SK-N-SH (cell line): ENCODE measurements at regions of chr10 and their contacts with region 1.

Region 1: GRCh38 chr10:63629363-63630084 is 108.3 kb downstream of the REEP3 start:
- DNase-seq: peak; percentile 65
- H3K4me3 ChIP-seq: peak overlapping the region; percentile 64 to 73
- H3K27ac ChIP-seq: peak overlapping the region; percentile 100
- H3K4me1 ChIP-seq: peaks cover 25 to 27% of the 10 kb centered on the region in 2 experiments
- H3K27me3 ChIP-seq: no peaks in the 10 kb centered on the region
- CTCF ChIP-seq: peak; percentile 91
- EP300 ChIP-seq: peak; percentile 76 to 78
- RAD21 ChIP-seq: peak; percentile 94

Region 2: DNA sequence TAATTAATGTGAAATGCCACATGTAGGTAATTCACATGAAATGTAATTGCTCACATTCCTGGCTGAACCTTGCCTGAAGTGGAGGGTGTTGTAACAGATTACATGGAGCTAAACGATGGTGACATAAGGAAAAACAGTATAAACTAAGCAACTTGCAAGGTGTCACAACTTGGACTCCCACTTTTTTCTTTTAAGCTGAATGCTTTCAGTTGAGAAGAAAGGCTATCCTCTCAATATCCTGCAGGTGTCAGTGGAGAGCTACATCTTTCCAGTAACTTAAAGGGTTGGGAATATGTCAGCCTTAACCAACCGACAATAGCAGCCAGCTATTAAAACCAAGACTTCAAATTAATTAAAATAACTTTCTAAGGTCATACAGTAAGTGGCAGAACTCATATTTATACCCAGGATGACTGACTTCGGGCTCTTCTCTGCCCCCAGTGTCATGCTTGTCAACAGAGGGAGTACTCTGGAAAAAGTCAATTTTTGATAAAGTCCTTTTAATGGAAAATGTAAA is 462.7 kb before region 1 on chr10:
- CTCF ChIA-PET with region 1: interaction called, 79 read pairs
- POLR2A ChIA-PET with region 1: interaction called, 22 read pairs
- DNase-seq: peak; percentile 41
- H3K4me3 ChIP-seq: no peak overlapping the region
- H3K27ac ChIP-seq: peak overlapping the region; percentile 17 to 34; a peak in 1 of 4 replicates
- H3K4me1 ChIP-seq: peaks cover 0 to 5% of the 10 kb centered on the region in 2 experiments; a peak in 3 of 4 replicates
- H3K27me3 ChIP-seq: no peaks in the 10 kb centered on the region
- CTCF ChIP-seq: peak; percentile 87
- EP300 ChIP-seq: no peak
- RAD21 ChIP-seq: peak; percentile 83

Region 3: GRCh38 chr10:63217120-63217605 is 412.4 kb before region 1 on chr10:
- CTCF ChIA-PET with region 1: interaction called, 34 read pairs
- POLR2A ChIA-PET with region 1: interaction called, 3 read pairs
- DNase-seq: peak; percentile 54
- H3K4me3 ChIP-seq: peak overlapping the region in 1 of 2 experiments; percentile 1; a peak in 1 of 4 replicates
- H3K27ac ChIP-seq: peak overlapping the region; percentile 58 to 71; a peak in 3 of 4 replicates
- H3K4me1 ChIP-seq: peaks cover 5 to 11% of the 10 kb centered on the region in 2 experiments; a peak in 3 of 4 replicates
- H3K27me3 ChIP-seq: no peaks in the 10 kb centered on the region
- CTCF ChIP-seq: peak; percentile 78
- EP300 ChIP-seq: no peak
- RAD21 ChIP-seq: peak; percentile 81

Region 4: DNA sequence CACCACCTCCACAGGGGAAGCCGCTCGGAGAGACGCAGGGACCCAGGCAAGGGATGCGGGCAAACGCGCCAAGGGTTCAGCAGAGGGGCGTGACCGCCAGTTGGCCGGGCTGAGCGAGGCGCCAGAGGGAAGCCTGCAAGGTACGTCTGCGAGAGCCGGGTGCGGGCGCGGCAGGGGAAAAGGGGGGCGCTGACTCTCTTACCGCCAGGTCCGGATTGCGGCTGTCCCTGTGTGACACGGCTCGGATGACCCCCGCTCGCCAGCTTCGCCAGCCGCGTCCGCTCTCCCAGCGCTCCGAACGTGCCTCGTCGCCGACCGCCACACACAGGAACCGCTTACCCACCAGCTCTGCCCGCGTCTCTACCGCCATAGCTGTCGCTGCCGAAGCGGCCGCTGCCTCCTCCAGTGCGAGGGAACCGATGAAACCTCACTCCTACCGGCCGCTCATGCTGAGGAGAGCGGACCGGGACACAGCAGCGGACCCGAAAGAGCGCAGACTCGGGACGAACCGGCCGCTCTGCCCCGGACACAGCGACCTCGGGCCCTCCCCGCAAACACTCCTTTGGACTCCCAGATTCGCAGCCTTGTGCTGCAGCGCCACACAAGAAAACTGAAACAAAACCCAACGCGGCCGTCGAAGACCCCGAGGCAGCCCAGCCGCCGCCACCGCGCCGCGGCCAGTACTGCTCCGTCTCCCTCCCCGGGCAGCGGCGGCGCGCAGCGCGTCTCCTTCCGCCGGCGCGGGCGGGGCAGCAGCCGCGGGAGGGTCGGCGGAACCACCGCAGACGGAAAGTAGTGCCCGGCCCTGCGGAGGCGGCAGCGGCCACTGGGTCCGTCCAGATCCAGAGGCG is 164.0 kb before region 1 on chr10 and contains the start of gene JMJD1C:
- CTCF ChIA-PET with region 1: interaction called, 9 read pairs
- POLR2A ChIA-PET with region 1: interaction called, 24 read pairs
- DNase-seq: peak; percentile 91
- H3K4me3 ChIP-seq: peak within 1 kb of the TSS; percentile 82 to 96
- H3K27ac ChIP-seq: peak within 1 kb of the TSS; percentile 86 to 98
- H3K4me1 ChIP-seq: peaks cover 14 to 33% of the 10 kb centered on the region in 2 experiments; a peak in 3 of 4 replicates
- H3K27me3 ChIP-seq: no peaks in the 10 kb centered on the region
- CTCF ChIP-seq: no peak
- EP300 ChIP-seq: peak in 1 of 2 experiments; percentile 27; a peak in 1 of 4 replicates
- RAD21 ChIP-seq: no peak
- polyA plus RNA-seq, gene JMJD1C: 11.7 and 15.3 TPM in 2 replicates

Region 5: DNA sequence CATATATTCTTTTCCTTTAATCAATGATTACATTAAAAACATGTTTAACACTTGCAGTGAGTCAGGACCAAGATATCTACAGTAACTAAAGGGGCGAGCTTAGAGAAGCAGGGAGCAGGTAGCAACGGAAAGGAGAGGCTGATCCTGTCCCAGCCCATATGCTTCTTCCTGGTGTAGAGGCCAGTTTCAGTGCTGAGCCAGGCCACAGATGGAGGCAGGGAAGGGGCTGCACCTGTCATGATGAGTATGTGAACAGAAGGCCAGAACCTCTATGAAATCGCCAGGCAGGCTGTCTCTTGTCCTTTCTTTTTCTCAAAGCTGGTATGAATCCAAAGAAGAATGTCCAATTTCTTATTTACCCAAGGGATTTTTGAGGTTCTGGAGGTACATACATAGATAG is 92.0 kb before region 1 on chr10:
- CTCF ChIA-PET with region 1: interaction called, 36 read pairs
- POLR2A ChIA-PET with region 1: interaction called, 11 read pairs
- DNase-seq: no peak
- H3K4me3 ChIP-seq: no peak overlapping the region
- H3K27ac ChIP-seq: peak overlapping the region in 1 of 2 experiments; percentile 3; a peak in 2 of 4 replicates
- H3K4me1 ChIP-seq: peaks cover 4 to 25% of the 10 kb centered on the region in 2 experiments; a peak in 3 of 4 replicates
- H3K27me3 ChIP-seq: no peaks in the 10 kb centered on the region
- CTCF ChIP-seq: no peak
- EP300 ChIP-seq: no peak
- RAD21 ChIP-seq: no peak

Region 6: DNA sequence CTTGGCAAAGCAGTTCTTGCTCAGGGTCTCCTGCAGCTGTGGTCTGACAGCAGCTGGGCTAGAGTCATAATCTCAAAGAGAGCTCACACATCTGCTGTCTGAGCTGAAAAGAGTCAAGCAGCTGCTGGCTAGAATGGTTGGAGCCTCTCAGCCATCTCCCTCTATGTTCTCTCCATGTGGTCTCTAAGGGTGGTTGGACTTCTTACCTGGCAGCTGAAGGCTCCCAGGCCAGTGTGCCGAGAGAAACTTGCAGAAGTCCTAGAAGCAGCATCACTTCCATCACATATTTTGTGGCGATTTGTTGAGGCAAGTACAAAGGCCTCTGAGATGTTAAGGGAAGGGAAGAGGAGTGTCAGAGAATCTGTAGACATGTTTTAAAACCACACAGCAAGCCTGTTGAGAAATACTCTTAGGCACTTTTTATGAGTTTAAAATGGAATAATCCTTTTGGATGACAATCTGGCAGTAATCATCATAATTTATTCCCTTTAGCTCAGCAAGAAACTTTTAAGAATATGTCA is 15.1 kb before region 1 on chr10:
- CTCF ChIA-PET with region 1: interaction called, 13 read pairs
- POLR2A ChIA-PET with region 1: interaction called, 3 read pairs
- DNase-seq: peak; percentile 33
- H3K4me3 ChIP-seq: no peak overlapping the region
- H3K27ac ChIP-seq: peak overlapping the region in 1 of 2 experiments; percentile 76; a peak in 2 of 4 replicates
- H3K4me1 ChIP-seq: peaks cover 9 to 11% of the 10 kb centered on the region in 2 experiments; a peak in 3 of 4 replicates
- H3K27me3 ChIP-seq: no peaks in the 10 kb centered on the region
- CTCF ChIP-seq: no peak
- EP300 ChIP-seq: no peak
- RAD21 ChIP-seq: peak; percentile 9; the same call in 1 of the 2 replicates

Region 7: DNA sequence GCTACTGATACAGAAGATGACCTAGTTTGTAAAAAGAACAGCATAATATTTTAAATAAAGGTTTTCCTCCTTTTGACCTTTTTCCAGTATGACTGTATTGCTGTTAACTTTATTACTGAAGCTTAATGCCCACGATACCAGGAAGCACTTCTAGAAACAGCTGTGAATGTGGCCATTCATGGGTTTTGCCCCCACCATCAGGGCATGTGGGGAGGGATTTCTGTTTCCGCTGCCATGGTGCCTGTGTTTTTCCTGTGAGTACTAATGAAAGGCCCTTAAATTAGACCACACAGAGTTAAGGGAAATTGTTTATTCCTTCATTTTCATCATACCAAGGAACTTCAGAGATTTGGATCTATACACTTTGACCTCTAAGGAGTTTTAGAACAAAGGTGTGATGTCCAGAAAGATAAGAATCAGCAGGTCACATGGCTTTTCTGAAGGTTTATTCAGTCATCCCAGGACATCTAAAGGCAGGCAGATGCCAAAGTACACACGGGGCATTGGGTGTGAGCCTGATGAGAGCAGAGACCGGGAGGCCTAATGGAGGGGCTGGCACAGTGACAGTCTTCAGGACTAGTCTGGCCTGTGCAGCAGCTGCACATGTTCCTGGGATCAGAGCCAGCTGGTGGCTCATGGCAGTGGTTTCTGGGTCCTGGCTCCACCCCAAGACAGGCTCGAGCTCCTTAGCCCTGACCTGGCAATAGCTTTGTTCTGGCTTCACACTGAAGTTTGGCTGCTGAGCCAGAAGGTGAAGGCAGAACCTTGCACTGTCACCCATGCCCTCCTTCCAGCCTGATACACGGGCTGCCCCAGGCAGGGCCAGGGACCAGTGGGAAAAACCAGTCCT is 82.6 kb after region 1 on chr10:
- CTCF ChIA-PET with region 1: interaction called, 213 read pairs
- POLR2A ChIA-PET with region 1: interaction called, 94 read pairs
- DNase-seq: peak; percentile 82
- H3K4me3 ChIP-seq: no peak overlapping the region; a peak in 1 of 4 replicates
- H3K27ac ChIP-seq: peak overlapping the region; percentile 98 to 100
- H3K4me1 ChIP-seq: peaks cover 39 to 54% of the 10 kb centered on the region in 2 experiments
- H3K27me3 ChIP-seq: no peaks in the 10 kb centered on the region
- CTCF ChIP-seq: no peak
- EP300 ChIP-seq: peak; percentile 94 to 97
- RAD21 ChIP-seq: peak; percentile 31; the same call in 1 of the 2 replicates

Region 8: GRCh38 chr10:63994371-63994770 is 364.8 kb after region 1 on chr10:
- CTCF ChIA-PET with region 1: no interaction called
- POLR2A ChIA-PET with region 1: no interaction called
- DNase-seq: no peak
- H3K4me3 ChIP-seq: no peak overlapping the region
- H3K27ac ChIP-seq: no peak overlapping the region
- H3K4me1 ChIP-seq: no peaks in the 10 kb centered on the region
- H3K27me3 ChIP-seq: no peaks in the 10 kb centered on the region
- CTCF ChIP-seq: no peak
- EP300 ChIP-seq: no peak
- RAD21 ChIP-seq: no peak

Region 9: GRCh38 chr10:64196638-64197315 is 567.3 kb after region 1 on chr10:
- CTCF ChIA-PET with region 1: no interaction called
- POLR2A ChIA-PET with region 1: no interaction called
- DNase-seq: no peak
- H3K4me3 ChIP-seq: no peak overlapping the region
- H3K27ac ChIP-seq: no peak overlapping the region
- H3K4me1 ChIP-seq: peaks cover 0 to 3% of the 10 kb centered on the region in 2 experiments; a peak in 2 of 4 replicates
- H3K27me3 ChIP-seq: no peaks in the 10 kb centered on the region
- CTCF ChIP-seq: no peak
- EP300 ChIP-seq: no peak
- RAD21 ChIP-seq: no peak